ENCODE measurements at regions of chr5 and their contacts with region 1.

Region 1: DNA sequence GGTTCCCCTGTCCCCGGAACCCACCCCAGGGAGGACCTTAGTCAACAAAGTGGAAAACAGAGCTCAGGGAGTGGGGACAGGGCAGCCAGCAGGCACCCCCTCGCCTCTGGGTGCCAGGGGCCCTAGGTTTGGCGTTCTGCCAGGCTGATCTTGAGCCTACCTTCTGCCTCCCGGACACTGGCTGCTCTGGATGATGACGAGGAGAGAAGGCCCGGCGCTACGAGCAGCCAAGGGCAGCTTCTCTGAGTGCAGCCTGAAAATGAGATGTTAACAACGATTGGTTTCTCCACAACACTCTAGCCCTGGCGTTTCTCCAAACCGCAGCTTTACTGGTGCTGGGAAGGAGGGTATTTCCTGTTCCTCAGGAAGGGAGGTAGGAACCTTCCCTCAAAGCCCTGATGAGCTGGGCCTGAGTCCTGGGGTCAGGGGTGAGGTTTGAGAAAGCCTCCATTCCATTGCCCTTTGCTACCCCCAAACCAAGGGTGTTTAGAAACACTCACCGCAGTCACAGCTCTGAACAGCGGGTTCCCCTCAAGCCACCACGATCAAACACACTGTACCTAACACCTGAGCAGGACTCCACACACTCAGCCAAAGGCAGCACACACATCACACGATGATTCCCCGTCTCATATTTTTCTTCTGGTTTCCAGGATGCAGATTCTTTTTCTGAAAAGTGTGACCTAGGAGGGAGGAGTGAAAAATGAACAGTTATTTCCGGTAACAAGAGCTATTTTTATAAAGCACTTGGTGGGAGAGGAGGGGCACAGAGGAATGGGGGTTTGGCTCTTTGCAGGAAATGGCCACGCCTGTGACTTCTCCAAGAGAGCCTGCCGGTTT is at the start of gene STING1:
- DNase-seq: peak; percentile 84 to 92 (median 86)
- ATAC-seq: peak; percentile 52 to 77 (median 72)
- H3K4me3 ChIP-seq: peak within 1 kb of the TSS; percentile 35 to 81 (median 62)
- H3K27ac ChIP-seq: peak within 1 kb of the TSS; percentile 86 to 98 (median 92)
- H3K4me1 ChIP-seq: peaks cover 0 to 77% (median 43%) of the 10 kb centered on the region in 12 donors
- H3K27me3 ChIP-seq: no peaks in the 10 kb centered on the region
- CTCF ChIP-seq: no peak
- POLR2A ChIP-seq: peak in 1 of 2 donors; percentile 25
- total RNA-seq, gene STING1: 32.4 to 119 (median 57.9) TPM

Region 2: DNA sequence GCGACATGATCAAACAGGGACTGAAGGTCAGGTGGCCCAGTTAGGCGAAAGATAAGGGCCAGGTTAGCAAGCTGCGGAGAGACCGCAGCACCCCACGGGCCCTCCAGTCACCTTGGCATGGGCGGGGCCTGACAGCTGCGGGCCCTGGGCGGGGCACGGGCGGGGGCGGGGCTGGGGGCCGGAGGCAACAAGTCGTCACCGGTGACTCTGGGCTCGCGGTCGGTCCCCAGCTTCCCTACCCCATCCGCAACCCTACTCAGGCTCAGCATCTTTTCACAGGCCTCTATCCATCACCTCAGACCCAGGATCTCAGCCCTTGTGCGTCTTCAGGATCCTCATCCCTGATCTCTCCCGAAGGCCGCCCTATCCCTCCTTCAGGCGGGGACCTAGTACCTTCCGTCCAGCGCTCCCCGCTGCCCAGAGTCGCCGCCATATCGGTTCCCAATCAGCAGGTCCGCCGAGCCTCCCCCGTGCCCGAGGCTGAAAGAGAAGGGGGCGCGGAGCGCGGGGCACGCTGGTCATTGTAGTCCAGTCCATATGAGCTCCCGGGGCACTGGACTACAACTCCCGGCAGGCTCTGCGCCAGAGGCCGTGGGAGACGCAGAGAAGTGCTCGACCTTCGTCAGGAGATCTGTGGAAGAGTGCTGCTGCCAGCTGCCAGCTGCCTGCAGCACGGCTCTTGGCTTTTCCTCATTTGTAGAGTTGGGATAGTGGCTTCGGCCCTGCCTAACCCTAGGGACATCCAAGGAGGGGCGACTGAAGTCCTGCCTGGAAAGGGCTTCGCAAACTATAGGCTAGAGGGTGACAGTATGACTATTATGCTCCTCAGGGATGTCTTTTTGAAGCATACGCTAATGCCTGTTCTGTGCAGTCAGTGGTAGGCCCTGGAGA is 43.0 kb before region 1 on chr5 and contains the start of gene DNAJC18:
- intact Hi-C with region 1: loop called in 5 of 10 experiments (anchors 2 to 10 kb)
- DNase-seq: peak; percentile 94 to 97 (median 96)
- ATAC-seq: peak; percentile 98 to 99 (median 99)
- H3K4me3 ChIP-seq: peak within 1 kb of the TSS; percentile 55 to 96 (median 89)
- H3K27ac ChIP-seq: peak within 1 kb of the TSS; percentile 87 to 99 (median 96)
- H3K4me1 ChIP-seq: peaks cover 0 to 15% (median 13%) of the 10 kb centered on the region in 12 donors
- H3K27me3 ChIP-seq: no peaks in the 10 kb centered on the region
- CTCF ChIP-seq: no peak
- POLR2A ChIP-seq: peak in 1 of 2 donors; percentile 57
- total RNA-seq, gene DNAJC18: 4.8 to 17.8 (median 14.2) TPM

Region 3: GRCh38 chr5:139461698-139462097 is 20.6 kb before region 1 on chr5:
- intact Hi-C with region 1: loop called in 1 of 10 experiments (anchors 2 kb)
- DNase-seq: peak in 1 of 5 donors; percentile 20
- ATAC-seq: peak; percentile 10 to 59 (median 40)
- H3K4me3 ChIP-seq: peak overlapping the region; percentile 25 to 70 (median 54)
- H3K27ac ChIP-seq: peak overlapping the region; percentile 66 to 94 (median 84)
- H3K4me1 ChIP-seq: peaks cover 0 to 36% (median 6%) of the 10 kb centered on the region in 12 donors
- H3K27me3 ChIP-seq: no peaks in the 10 kb centered on the region
- CTCF ChIP-seq: no peak
- POLR2A ChIP-seq: peak in 1 of 2 donors; percentile 38

Region 4: GRCh38 chr5:139543423-139543991 is 61.2 kb after region 1 on chr5:
- intact Hi-C with region 1: no loop called
- DNase-seq: peak; percentile 78 to 89 (median 85)
- ATAC-seq: peak; percentile 94 to 100 (median 100)
- H3K4me3 ChIP-seq: peak overlapping the region in 10 of 12 donors; percentile 14 to 51 (median 36)
- H3K27ac ChIP-seq: peak overlapping the region in 10 of 12 donors; percentile 23 to 68 (median 50)
- H3K4me1 ChIP-seq: peaks cover 0 to 11% (median 5%) of the 10 kb centered on the region in 12 donors
- H3K27me3 ChIP-seq: no peaks in the 10 kb centered on the region
- CTCF ChIP-seq: peak in 8 of 12 donors; percentile 23 to 61 (median 44)
- POLR2A ChIP-seq: no peak